ENCODE measurements at regions of chr11 and their contacts with region 1.

Region 1: DNA sequence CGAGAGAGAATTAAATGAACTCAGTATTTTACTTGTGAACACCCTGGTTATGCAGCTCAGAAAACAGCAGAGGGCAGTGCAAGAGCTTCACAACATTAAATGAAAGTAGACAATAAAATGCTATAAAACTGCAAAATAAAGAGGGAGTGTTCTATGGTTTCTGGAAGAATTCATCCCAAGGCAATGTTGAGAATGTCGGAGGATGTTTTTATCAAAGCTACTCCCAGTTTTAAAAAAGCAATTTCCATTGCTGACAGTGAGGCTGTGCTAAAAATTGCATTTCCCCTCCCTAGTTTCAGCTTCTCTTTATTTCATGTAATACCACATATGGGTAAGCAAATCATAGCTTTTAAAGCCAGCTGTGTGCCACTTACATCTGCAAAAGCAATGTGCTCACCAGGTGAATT is 296.9 kb downstream of the RAB38 start:
- DNase-seq: peak; percentile 75
- ATAC-seq: peak; percentile 77
- H3K4me3 ChIP-seq: no peak overlapping the region
- H3K27ac ChIP-seq: peak overlapping the region; percentile 1; the same call in 1 of the 2 replicates
- H3K4me1 ChIP-seq: peaks cover 13% of the 10 kb centered on the region
- H3K27me3 ChIP-seq: no peaks in the 10 kb centered on the region
- CTCF ChIP-seq: peak; percentile 90

Region 2: DNA sequence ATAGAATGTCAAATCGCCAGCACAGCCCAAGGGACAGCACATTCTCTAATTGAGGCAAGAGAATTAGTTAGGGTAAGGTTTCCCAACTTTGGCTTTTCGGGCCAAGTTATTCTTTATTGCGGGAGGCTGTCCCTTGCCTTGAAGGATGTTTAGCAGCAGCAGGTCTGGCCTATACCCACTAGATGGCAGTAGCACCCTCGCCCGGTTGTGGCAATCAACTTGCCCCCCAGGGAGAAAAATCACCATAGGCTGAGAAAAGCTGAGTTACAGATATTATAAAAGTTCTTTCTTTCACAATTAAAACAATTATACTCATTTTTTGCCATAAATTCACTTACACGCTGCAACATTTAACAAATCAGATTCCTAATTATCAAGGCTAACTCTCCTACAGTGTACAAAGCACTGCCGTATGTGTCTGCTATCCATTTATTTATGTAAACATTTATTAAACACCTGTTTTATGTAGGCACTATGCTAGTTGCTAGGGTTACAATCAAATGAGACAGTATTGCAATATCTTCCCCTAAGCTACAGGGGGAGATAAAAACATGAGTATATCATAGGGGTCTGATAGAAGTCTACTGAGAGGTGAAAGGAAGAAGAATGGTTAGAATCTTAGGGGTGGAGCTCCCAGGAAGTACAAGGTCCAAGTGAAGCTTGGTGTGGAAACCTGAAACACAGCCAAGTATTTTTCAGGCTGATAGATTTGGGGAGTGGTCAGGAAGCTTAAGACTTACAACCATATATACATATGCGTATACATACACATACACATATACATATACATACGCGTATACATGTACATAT is 155.4 kb before region 1 on chr11:
- CTCF ChIA-PET with region 1: interaction called, 3 read pairs
- POLR2A ChIA-PET with region 1: no interaction called
- intact Hi-C with region 1: loop called (anchors 1 kb)
- DNase-seq: peak; percentile 64
- ATAC-seq: peak; percentile 72
- H3K4me3 ChIP-seq: 0 out of 2 replicates have a peak overlapping the region, but pooled peaks have one; percentile 8
- H3K27ac ChIP-seq: no peak overlapping the region
- H3K4me1 ChIP-seq: peaks cover 11% of the 10 kb centered on the region
- H3K27me3 ChIP-seq: no peaks in the 10 kb centered on the region
- CTCF ChIP-seq: peak; percentile 94

Region 3: DNA sequence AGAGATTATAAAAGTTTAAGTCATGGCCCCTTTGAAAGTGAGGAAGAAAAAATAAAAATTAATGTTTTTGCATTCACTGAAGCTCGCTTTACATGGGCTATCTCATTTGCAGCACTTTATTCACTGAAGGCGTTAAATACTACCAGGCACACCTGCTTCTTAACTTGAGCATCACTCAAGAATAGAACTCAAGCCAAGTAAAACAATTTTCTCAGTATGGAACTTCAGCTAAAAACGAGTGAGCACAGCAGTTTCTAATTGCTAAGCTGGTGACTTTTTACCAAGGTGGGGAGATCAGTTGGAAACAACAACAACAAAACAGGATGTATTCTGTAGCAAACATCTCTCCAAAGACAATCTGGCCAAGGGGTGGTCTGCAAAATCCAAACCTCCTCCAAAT is 108.7 kb before region 1 on chr11:
- CTCF ChIA-PET with region 1: no interaction called
- POLR2A ChIA-PET with region 1: no interaction called
- intact Hi-C with region 1: loop called (anchors 5 kb)
- DNase-seq: no peak
- ATAC-seq: no peak
- H3K4me3 ChIP-seq: no peak overlapping the region
- H3K27ac ChIP-seq: no peak overlapping the region
- H3K4me1 ChIP-seq: peaks cover 3% of the 10 kb centered on the region
- H3K27me3 ChIP-seq: no peaks in the 10 kb centered on the region; the same call in 1 of the 2 replicates
- CTCF ChIP-seq: no peak

Region 4: DNA sequence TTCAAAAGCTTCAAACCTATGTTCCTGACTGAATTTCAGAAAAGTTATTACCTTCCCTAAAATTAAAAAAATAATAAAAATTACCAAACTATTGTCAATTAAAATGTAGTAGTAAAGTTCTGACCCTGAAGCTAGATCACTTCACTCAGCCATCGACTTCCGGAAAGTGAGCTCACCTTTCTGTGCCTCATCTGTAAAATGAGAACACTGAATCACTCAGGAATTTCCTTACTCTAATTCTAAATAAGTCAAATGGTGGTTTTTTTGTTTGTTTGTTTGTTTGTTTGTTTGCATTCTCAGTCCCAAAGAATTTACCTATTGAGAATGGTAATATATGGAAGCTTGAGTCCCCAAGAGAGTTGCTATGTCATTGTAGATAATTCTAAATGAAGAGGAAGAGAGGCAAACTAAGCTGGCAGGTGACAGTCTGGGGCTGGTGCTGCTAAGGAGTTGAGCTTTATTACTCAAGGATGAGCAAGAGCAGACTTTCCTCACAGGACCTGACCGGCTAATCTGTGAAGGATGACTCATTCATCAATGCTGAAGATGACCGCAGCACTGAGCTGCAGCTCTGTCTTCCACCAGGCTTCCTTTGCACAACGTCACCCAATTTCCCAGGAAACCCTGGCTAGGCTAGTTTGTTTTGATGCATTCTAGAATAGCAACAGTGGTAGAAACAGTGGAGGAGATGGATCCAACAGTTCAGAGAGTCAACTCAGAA is 48.0 kb after region 1 on chr11:
- CTCF ChIA-PET with region 1: interaction called, 11 read pairs
- POLR2A ChIA-PET with region 1: no interaction called
- intact Hi-C with region 1: loop called (anchors 5 kb)
- DNase-seq: peak; percentile 98
- ATAC-seq: peak; percentile 99
- H3K4me3 ChIP-seq: peak overlapping the region; percentile 8; the same call in 1 of the 2 replicates
- H3K27ac ChIP-seq: peak overlapping the region; percentile 82
- H3K4me1 ChIP-seq: peaks cover 23% of the 10 kb centered on the region
- H3K27me3 ChIP-seq: no peaks in the 10 kb centered on the region
- CTCF ChIP-seq: no peak

Region 5: GRCh38 chr11:88103337-88104206 is 225.2 kb after region 1 on chr11:
- CTCF ChIA-PET with region 1: no interaction called
- POLR2A ChIA-PET with region 1: no interaction called
- intact Hi-C with region 1: loop called (anchors 5 kb)
- DNase-seq: peak; percentile 79
- ATAC-seq: peak; percentile 49
- H3K4me3 ChIP-seq: no peak overlapping the region
- H3K27ac ChIP-seq: peak overlapping the region; percentile 59
- H3K4me1 ChIP-seq: peaks cover 30% of the 10 kb centered on the region
- H3K27me3 ChIP-seq: no peaks in the 10 kb centered on the region
- CTCF ChIP-seq: peak; percentile 88

Region 6: DNA sequence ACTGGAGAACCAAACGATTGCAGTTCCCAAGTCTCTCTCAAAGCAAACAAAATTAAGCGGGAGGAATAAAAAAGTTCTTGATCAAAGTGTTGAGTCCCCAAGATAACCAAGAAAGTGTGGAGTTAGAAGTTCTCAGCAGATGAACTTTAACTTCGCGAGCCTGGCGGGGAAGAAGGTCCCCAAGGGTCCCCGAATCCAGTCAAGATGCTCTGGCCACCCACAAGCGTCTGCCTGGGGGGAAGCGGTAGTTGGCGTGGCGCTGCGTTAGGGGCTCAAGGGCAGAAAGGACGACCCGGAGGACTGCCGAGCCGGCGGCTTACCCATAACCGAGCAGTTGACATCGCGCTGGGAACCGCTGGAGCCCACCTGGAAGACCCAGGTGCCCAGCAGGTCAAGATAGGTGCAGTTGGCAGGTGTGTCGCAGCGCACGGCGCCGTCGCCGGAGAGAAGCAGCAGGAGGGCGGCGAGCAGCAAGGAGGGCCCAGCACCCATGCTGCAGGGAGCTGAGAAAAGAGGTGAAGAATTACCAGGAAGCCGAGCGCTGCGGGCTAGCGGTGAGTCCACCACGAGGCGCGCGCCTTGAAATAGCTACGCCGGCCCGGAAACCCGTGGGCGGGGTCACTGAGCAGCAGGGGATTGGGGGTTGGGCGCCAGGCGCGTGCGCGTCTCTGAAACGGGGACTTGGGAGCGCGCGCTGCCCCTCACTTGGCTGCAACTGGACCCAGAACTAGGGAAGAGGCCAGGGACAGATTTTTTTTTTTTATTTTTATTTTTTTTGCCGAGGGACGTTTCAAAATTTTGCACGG is 459.0 kb after region 1 on chr11 and contains the start of gene CTSC:
- CTCF ChIA-PET with region 1: interaction called, 4 read pairs
- POLR2A ChIA-PET with region 1: no interaction called
- intact Hi-C with region 1: loop called (anchors 10 kb)
- DNase-seq: peak; percentile 96
- ATAC-seq: peak; percentile 85
- H3K4me3 ChIP-seq: peak within 1 kb of the TSS; percentile 98
- H3K27ac ChIP-seq: peak within 1 kb of the TSS; percentile 78
- H3K4me1 ChIP-seq: peaks cover 48% of the 10 kb centered on the region
- H3K27me3 ChIP-seq: no peaks in the 10 kb centered on the region
- CTCF ChIP-seq: no peak
- total RNA-seq, gene CTSC: 200 and 240 TPM in 2 replicates

Measured in PC-3 (cell line).